ENCODE measurements at regions of chr17 and their contacts with region 1.

Region 1: DNA sequence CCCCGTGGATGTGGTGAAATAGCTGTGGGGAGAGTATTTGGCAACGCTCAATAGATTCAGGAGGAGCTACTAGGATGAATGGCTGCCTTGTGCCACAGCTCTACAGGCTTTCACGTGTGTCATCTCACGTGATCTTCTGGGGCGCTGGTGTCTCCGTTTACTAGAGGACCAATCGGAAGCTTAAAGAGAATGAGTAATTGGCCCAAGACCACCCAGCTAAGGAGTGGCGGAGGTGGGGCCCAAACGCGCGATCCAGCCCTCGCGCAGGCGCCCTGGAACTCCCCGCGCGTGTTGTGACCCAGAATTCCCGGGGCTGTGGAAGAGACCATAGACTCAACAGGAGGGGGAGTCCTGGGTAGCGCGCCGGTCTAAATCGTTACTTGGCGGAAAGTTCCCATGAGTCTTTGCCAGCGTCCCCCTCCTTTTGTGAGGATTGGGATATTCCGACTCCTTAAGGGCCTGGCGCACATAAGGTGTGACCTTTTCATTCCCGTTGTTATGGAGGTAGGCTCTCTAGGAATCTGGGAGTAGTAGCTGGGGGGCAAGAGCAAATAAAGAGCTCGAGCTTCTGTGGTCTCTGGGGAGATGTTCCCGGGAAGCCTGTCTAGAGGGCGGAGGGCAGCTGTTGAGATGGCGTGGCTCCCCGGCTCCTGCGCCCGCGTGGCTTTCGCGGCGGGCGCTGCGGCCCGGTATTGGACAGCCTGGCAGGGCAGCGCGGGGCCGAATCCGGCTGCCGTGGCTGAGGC is 23.4 kb downstream of the TRPV2 start:
- DNase-seq: peak; percentile 94
- ATAC-seq: peak; percentile 97

Region 2: DNA sequence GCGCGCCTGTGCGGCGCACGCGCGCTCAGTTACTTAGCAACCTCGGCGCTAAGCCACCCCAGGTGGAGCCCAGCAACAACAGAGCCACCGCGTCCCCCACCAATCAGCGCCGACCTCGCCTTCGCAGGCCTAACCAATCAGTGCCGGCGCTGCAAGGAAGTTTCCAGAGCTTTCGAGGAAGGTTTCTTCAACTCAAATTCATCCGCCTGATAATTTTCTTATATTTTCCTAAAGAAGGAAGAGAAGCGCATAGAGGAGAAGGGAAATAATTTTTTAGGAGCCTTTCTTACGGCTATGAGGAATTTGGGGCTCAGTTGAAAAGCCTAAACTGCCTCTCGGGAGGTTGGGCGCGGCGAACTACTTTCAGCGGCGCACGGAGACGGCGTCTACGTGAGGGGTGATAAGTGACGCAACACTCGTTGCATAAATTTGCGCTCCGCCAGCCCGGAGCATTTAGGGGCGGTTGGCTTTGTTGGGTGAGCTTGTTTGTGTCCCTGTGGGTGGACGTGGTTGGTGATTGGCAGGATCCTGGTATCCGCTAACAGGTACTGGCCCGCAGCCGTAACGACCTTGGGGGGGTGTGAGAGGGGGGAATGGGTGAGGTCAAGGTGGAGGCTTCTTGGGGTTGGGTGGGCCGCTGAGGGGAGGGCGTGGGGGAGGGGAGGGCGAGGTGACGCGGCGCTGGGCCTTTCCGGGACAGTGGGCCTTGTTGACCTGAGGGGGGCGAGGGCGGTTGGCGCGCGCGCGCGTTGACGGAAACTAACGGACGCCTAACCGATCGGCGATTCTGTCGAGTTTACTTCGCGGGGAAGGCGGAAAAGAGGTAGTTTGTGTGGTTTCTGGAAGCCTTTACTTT is 57.9 kb before region 1 on chr17 and contains the start of gene UBB:
- intact Hi-C with region 1: loop called (anchors 2 kb)
- DNase-seq: peak; percentile 98
- ATAC-seq: peak; percentile 99
- total RNA-seq, gene UBB: 1,403 TPM

Region 3: DNA sequence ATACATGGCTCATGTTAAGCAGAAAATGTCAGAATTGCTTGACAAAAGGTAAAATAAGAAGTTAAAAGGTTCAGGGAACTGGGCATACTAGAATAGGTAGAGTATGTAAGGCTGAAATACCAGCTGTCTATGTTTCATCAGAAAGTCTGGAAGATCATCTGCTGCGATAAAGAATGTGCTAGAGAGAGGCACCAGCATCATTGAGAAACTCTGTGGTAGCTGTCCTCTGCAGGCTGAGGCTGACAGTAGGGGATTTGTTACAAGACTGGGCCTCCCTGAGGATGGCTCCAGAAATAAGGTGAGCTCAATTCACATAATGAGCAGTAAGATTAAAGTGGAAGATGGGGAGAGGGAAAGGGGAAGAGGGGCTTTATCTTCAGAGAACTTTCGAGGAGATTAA is 134.7 kb after region 1 on chr17:
- intact Hi-C with region 1: no loop called
- DNase-seq: no peak
- ATAC-seq: no peak

Region 4: DNA sequence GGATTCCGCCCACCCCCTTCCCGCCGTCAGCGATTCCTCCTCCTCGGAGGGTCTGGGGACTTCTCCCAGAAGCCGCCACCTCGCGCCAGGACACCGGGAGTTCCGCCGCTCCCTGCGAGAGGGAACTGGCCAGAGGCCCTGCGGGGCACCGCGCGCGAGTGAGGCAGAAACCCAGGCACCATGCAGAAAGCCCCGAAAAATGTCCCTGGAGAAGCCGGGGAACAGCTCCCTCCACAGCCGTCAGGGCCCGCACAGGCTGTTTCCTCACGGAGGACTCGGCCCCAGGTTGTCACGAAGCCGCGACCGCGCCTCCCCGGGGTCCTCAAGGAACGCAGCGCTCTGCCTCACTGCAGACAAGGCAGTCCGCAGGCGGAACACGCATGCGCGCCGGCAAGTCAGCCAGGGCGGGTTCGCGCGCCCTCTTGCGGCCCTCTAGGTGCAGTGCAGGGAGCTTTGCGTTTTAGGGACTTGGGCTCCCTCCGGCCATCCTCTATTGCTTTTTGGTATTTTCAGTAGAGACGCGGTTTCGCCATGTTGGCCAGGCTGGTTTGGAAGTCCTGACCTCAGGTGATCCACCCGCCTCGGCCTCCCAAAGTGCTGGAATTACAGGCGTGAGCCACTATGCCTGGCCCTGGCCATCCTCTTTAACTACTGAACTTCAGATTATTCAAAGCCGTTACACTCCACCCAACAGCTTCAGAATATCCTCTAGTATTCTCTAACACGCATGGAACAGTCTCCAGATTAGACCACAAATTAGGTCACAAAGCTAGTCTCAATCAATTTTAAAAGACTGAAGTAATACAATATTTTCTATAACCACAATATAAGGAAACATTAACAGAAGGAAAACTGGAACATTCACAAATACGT is 150.6 kb after region 1 on chr17:
- intact Hi-C with region 1: loop called (anchors 5 kb)
- DNase-seq: peak; percentile 97
- ATAC-seq: peak; percentile 89

Measured in Right ventricle myocardium inferior (tissue), 1 donor.